Left cardiac atrium (tissue), 4 donors: ENCODE measurements at regions of chr22 and their contacts with region 1.

Region 1: GRCh38 chr22:40036591-40037225 is 42.0 kb downstream of the FAM83F start:
- DNase-seq: peak; percentile 55
- ATAC-seq: peak; percentile 70 to 75

Region 2: DNA sequence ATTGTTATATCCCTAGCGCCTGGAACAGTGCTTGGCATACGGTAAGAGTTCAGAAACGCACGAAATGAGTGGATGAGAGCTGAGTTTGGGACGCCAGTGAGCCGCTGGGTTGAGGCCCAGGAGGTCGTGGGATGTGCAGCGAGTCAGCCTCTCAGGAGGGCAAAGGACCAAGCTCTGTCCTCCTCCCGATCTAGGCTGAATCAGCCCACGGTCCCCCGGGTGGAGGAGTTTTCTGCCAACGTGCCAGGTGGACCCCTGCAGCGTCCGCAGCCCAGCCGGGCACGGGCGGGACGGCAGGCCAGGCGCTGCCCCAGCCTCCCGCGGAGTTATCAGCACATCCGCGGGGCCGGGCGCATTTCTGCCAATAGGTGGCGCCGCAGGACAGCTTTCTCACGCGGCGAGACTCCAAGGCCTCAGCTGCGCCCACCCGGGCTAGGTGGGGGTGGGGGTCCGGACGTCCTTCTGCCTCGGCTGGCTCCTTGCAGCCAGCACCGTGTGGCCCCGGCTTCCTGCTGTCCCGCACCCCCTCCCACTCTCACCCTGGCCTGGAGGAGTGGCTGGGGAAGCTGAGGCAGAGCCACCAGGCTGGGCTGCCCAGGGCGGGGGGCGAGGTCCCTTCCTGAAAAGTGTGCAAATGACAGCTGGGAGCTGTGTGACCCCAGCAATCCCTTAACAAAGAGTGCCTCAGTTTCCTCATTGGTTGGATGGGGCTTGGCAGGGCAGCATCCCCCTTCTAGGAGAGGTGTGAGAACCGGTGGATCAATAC is 501.9 kb before region 1 on chr22:
- intact Hi-C with region 1: loop called in 1 of 2 experiments (anchors 2 kb)
- DNase-seq: peak; percentile 88
- ATAC-seq: peak; percentile 31 to 36

Region 3: DNA sequence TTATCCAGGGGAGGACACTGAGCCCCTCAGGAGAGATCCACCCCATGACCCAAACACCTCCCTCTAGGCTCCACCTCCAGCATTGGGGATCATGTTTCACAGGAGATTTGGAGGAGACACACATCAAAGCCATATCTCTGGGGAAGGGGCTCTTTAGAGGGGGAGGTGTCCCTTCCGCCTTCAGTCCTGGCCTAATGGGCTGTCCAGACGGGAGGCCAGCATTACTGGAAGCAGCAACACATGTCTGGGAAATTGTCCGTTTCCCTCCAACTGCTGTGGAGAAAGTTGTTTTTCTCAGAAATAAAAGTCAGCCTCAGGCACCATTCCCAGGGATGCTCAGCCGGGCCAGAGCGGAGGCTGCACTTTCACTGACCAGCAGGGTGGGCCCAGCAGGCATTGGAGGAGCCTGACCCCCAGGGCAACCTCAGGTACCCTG is 456.7 kb before region 1 on chr22:
- intact Hi-C with region 1: no loop called
- DNase-seq: no peak
- ATAC-seq: peak in 1 of 2 donors; percentile 27